B cell (primary cell): ENCODE measurements at regions of chr6 and their contacts with region 1.

Region 1: GRCh38 chr6:137313928-137314855 is 95.0 kb upstream of the IFNGR1 start:
- DNase-seq: peak; percentile 85
- ATAC-seq: peak; percentile 84
- H3K4me3 ChIP-seq: no peak overlapping the region
- H3K4me3 Mint-ChIP-seq: no peak overlapping the region
- H3K27ac ChIP-seq: no peak overlapping the region
- H3K27ac Mint-ChIP-seq: no peak overlapping the region
- H3K4me1 ChIP-seq: peaks cover 13 to 15% of the 10 kb centered on the region in 2 donors
- H3K4me1 Mint-ChIP-seq: peaks cover 22% of the 10 kb centered on the region
- H3K27me3 ChIP-seq: no peaks in the 10 kb centered on the region
- H3K27me3 Mint-ChIP-seq: no peaks in the 10 kb centered on the region
- CTCF ChIP-seq: peak; percentile 79

Region 2: GRCh38 chr6:136812174-136812573 is 502.0 kb before region 1 on chr6:
- CTCF ChIA-PET with region 1: no interaction called
- POLR2A ChIA-PET with region 1: no interaction called
- intact Hi-C with region 1: no loop called
- DNase-seq: no peak
- ATAC-seq: no peak
- H3K4me3 ChIP-seq: no peak overlapping the region
- H3K4me3 Mint-ChIP-seq: no peak overlapping the region
- H3K27ac ChIP-seq: no peak overlapping the region
- H3K27ac Mint-ChIP-seq: no peak overlapping the region
- H3K4me1 ChIP-seq: no peaks in the 10 kb centered on the region
- H3K4me1 Mint-ChIP-seq: no peaks in the 10 kb centered on the region
- H3K27me3 ChIP-seq: no peaks in the 10 kb centered on the region
- H3K27me3 Mint-ChIP-seq: peaks cover 8% of the 10 kb centered on the region
- CTCF ChIP-seq: no peak

Region 3: DNA sequence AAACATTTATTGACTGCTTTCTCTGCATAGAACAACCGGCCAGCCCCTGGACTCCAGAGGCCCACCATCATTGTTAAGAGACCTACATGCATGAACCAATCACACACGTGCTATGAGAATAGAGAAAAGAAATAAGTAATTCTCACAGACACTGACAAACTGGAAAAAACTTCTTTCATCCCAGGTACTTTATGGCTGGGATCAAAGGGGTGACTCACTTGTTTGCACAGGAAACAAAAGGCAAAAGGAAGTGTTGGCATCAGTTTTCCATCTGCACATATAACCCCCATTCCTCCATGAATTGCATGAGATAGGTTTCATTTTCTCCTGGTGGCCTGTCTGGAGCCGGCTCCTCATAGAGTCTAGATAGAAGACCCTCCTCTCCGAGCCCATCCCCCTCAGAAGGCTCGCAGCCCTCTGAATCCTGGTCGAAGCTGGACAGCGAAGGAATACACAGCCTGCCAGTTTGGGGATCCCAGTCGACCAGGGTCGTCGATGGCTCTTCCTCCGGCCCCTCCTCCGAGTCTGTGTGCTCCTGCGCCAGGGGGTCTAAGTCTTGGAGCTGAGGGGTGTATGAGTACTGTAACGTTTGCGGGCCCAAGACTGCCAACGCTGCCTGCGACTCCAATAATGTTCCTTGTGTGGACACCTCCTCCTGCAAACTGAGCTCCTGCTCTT is 312.8 kb before region 1 on chr6:
- CTCF ChIA-PET with region 1: no interaction called
- POLR2A ChIA-PET with region 1: no interaction called
- intact Hi-C with region 1: no loop called
- DNase-seq: no peak
- ATAC-seq: no peak
- H3K4me3 ChIP-seq: no peak overlapping the region
- H3K4me3 Mint-ChIP-seq: no peak overlapping the region
- H3K27ac ChIP-seq: no peak overlapping the region
- H3K27ac Mint-ChIP-seq: no peak overlapping the region
- H3K4me1 ChIP-seq: no peaks in the 10 kb centered on the region
- H3K4me1 Mint-ChIP-seq: no peaks in the 10 kb centered on the region
- H3K27me3 ChIP-seq: peaks cover 0 to 7% (median 3%) of the 10 kb centered on the region in 4 experiments
- H3K27me3 Mint-ChIP-seq: peaks cover 51% of the 10 kb centered on the region
- CTCF ChIP-seq: no peak

Region 4: DNA sequence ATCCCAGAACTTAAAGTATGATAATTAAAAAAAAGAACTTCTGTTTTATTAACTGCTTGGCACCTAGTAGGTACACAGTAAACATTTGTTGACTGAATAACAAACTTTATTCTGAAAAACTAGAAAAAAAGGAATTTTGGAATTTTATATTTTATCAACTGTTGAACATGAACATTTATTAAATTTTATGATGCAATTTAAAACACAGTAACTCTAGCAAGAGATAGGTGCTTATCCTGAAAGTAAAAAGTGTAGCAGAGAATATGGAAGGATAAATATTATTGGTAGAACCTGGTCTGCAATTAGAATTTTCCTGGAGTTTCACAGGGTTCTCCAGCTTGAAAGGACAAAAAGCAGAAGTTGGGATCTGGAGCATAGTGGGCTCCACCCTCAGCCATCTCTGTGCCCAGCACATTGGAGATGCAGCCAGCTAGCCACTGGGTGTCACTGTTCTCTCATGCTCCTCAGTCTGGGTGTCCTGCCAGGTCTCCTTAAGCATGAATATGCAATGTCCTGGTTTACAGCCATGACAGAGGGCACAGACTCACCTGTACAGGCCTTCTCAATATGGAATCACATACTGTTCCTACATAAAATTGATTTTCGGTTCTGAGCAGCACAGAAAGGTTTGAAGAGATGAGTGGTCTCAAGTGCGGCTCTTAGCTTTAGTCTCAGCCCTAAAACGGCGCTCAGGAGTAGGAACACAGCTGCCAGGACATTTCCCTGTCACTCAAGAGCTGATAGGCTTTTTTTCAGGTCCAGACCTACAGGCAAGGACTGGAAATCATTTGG is 237.7 kb before region 1 on chr6:
- CTCF ChIA-PET with region 1: interaction called, 56 read pairs
- POLR2A ChIA-PET with region 1: no interaction called
- intact Hi-C with region 1: loop called (anchors 1 kb)
- DNase-seq: peak; percentile 81
- ATAC-seq: peak; percentile 99
- H3K4me3 ChIP-seq: no peak overlapping the region
- H3K4me3 Mint-ChIP-seq: no peak overlapping the region
- H3K27ac ChIP-seq: no peak overlapping the region
- H3K27ac Mint-ChIP-seq: no peak overlapping the region
- H3K4me1 ChIP-seq: no peaks in the 10 kb centered on the region
- H3K4me1 Mint-ChIP-seq: peaks cover 3% of the 10 kb centered on the region
- H3K27me3 ChIP-seq: no peaks in the 10 kb centered on the region
- H3K27me3 Mint-ChIP-seq: peaks cover 5% of the 10 kb centered on the region
- CTCF ChIP-seq: peak; percentile 82

Region 5: GRCh38 chr6:137102851-137103492 is 211.2 kb before region 1 on chr6:
- CTCF ChIA-PET with region 1: interaction called, 15 read pairs
- POLR2A ChIA-PET with region 1: interaction called, 12 read pairs
- intact Hi-C with region 1: no loop called
- DNase-seq: peak; percentile 92
- ATAC-seq: peak; percentile 81
- H3K4me3 ChIP-seq: peak overlapping the region in 4 of 5 experiments; percentile 8 to 49 (median 16)
- H3K4me3 Mint-ChIP-seq: peak overlapping the region; percentile 86
- H3K27ac ChIP-seq: peak overlapping the region; percentile 97
- H3K27ac Mint-ChIP-seq: peak overlapping the region; percentile 99
- H3K4me1 ChIP-seq: peaks cover 89 to 91% of the 10 kb centered on the region in 2 donors
- H3K4me1 Mint-ChIP-seq: peaks cover 87% of the 10 kb centered on the region
- H3K27me3 ChIP-seq: no peaks in the 10 kb centered on the region
- H3K27me3 Mint-ChIP-seq: no peaks in the 10 kb centered on the region
- CTCF ChIP-seq: no peak

Region 6: GRCh38 chr6:137202078-137202477 is 112.1 kb before region 1 on chr6:
- CTCF ChIA-PET with region 1: interaction called, 5 read pairs
- POLR2A ChIA-PET with region 1: no interaction called
- intact Hi-C with region 1: loop called (anchors 5 kb)
- DNase-seq: peak; percentile 55
- ATAC-seq: peak; percentile 74
- H3K4me3 ChIP-seq: no peak overlapping the region
- H3K4me3 Mint-ChIP-seq: no peak overlapping the region
- H3K27ac ChIP-seq: no peak overlapping the region
- H3K27ac Mint-ChIP-seq: peak overlapping the region; percentile 61
- H3K4me1 ChIP-seq: peaks cover 10 to 11% of the 10 kb centered on the region in 2 donors
- H3K4me1 Mint-ChIP-seq: peaks cover 31% of the 10 kb centered on the region
- H3K27me3 ChIP-seq: no peaks in the 10 kb centered on the region
- H3K27me3 Mint-ChIP-seq: no peaks in the 10 kb centered on the region
- CTCF ChIP-seq: peak; percentile 67

Region 7: GRCh38 chr6:137277971-137278637 is 36.1 kb before region 1 on chr6:
- CTCF ChIA-PET with region 1: interaction called, 31 read pairs
- POLR2A ChIA-PET with region 1: no interaction called
- intact Hi-C with region 1: no loop called
- DNase-seq: no peak
- ATAC-seq: no peak
- H3K4me3 ChIP-seq: no peak overlapping the region
- H3K4me3 Mint-ChIP-seq: no peak overlapping the region
- H3K27ac ChIP-seq: no peak overlapping the region
- H3K27ac Mint-ChIP-seq: no peak overlapping the region
- H3K4me1 ChIP-seq: peaks cover 26 to 27% of the 10 kb centered on the region in 2 donors
- H3K4me1 Mint-ChIP-seq: peaks cover 33% of the 10 kb centered on the region
- H3K27me3 ChIP-seq: no peaks in the 10 kb centered on the region
- H3K27me3 Mint-ChIP-seq: no peaks in the 10 kb centered on the region
- CTCF ChIP-seq: no peak

Region 8: DNA sequence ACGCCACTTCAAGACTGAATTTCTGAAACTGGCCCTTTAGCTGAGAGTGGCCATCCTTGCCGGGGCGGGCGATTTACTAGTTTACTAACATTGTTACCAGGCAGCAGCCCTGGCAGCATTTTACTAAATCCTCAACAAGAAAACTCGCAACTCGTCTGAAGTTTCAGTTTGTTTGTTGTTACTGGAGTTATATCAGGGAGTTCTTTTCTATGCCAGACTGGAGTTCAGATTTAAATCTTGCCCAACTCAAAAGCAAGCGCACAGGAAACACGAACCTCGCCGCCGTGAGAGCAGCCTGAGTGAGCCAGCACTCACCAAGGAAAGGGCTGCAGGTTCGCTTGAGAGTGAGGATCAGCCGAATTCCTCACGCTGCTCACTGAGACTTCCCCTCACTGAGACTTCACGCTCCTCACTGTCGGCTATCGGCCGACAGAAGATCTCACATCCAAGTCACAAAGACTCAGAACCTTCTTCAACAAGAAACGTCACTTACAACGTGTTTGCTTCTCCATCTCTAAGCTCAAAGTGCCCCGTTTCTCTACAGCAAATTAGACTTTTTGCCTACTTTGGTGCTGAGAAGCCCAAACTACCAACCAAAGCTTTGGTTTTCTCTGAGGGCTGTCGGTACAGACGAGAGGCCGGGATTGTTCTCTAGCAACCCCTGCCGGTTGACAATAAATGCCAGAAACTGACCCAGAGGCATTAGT is 101.1 kb after region 1 on chr6:
- CTCF ChIA-PET with region 1: interaction called, 15 read pairs
- POLR2A ChIA-PET with region 1: no interaction called
- intact Hi-C with region 1: no loop called
- DNase-seq: peak; percentile 81
- ATAC-seq: peak; percentile 97
- H3K4me3 ChIP-seq: peak overlapping the region; percentile 39 to 77 (median 63)
- H3K4me3 Mint-ChIP-seq: peak overlapping the region; percentile 89
- H3K27ac ChIP-seq: peak overlapping the region; percentile 14 to 65
- H3K27ac Mint-ChIP-seq: peak overlapping the region; percentile 43
- H3K4me1 ChIP-seq: peaks cover 8 to 9% of the 10 kb centered on the region in 2 donors
- H3K4me1 Mint-ChIP-seq: peaks cover 10% of the 10 kb centered on the region
- H3K27me3 ChIP-seq: peaks cover 0 to 9% (median 3%) of the 10 kb centered on the region in 4 experiments
- H3K27me3 Mint-ChIP-seq: peaks cover 7% of the 10 kb centered on the region
- CTCF ChIP-seq: peak; percentile 79